ENCODE measurements at regions of chr4 and their contacts with region 1.

Region 1: GRCh38 chr4:6008092-6008551 is 10.1 kb downstream of the C4orf50 start:
- DNase-seq: no peak
- ATAC-seq: no peak

Region 2: GRCh38 chr4:5845035-5845905 is 162.9 kb before region 1 on chr4:
- intact Hi-C with region 1: no loop called
- DNase-seq: no peak
- ATAC-seq: no peak

Region 3: GRCh38 chr4:6071959-6072720 is 64.0 kb after region 1 on chr4:
- intact Hi-C with region 1: loop called (anchors 5 kb)
- DNase-seq: peak; percentile 59
- ATAC-seq: peak; percentile 55

Measured in Right ventricle myocardium superior (tissue), 1 donor.